B cell (primary cell): ENCODE measurements at regions of chrX and their contacts with region 1.

Region 1: DNA sequence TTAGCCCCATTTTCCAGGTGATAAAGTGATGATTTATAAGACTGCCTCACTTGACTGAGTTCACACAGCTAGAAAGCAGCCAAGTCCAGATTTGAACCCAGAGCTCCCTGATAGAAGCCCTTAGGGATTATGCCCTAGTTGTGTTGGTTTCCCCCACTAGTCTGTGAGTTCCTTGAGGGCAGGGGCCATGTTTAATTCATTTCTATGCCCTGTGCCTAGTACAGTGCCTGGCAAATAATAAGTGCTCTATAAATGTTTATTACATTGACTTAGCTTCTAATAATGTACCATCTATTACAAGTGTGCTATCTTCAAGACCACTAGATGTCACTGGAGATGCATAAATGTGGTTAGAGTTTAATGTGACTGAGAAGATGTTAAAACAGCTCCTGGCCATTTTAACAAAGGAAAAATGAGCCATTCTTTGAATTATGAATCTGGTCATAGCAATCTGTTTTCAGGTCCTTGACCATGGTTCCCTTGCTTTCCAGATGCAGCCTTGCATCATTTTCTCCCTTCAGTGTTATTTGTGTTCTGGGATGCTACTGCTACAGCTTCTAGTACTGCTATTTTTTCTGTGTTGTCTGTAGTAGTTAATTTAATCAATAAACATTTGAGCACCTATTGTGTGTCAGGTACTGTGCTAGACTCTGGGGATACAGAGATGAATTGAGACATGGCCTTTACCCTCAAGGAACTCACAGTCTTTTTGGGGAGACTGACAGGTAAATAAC is 43.2 kb downstream of the SLC9A6 start:
- DNase-seq: peak; percentile 58
- ATAC-seq: peak; percentile 24
- H3K4me3 ChIP-seq: no peak overlapping the region
- H3K4me3 Mint-ChIP-seq: no peak overlapping the region
- H3K27ac ChIP-seq: no peak overlapping the region
- H3K27ac Mint-ChIP-seq: no peak overlapping the region
- H3K4me1 ChIP-seq: no peaks in the 10 kb centered on the region
- H3K4me1 Mint-ChIP-seq: no peaks in the 10 kb centered on the region
- H3K27me3 ChIP-seq: no peaks in the 10 kb centered on the region
- H3K27me3 Mint-ChIP-seq: no peaks in the 10 kb centered on the region
- CTCF ChIP-seq: peak; percentile 67

Region 2: GRCh38 chrX:136162831-136163570 is 134.6 kb after region 1 on chrX:
- CTCF ChIA-PET with region 1: interaction called, 57 read pairs
- POLR2A ChIA-PET with region 1: no interaction called
- intact Hi-C with region 1: loop called (anchors 1 kb)
- DNase-seq: peak; percentile 40
- ATAC-seq: peak; percentile 49
- H3K4me3 ChIP-seq: no peak overlapping the region
- H3K4me3 Mint-ChIP-seq: no peak overlapping the region
- H3K27ac ChIP-seq: no peak overlapping the region
- H3K27ac Mint-ChIP-seq: no peak overlapping the region
- H3K4me1 ChIP-seq: no peaks in the 10 kb centered on the region
- H3K4me1 Mint-ChIP-seq: no peaks in the 10 kb centered on the region
- H3K27me3 ChIP-seq: no peaks in the 10 kb centered on the region
- H3K27me3 Mint-ChIP-seq: no peaks in the 10 kb centered on the region
- CTCF ChIP-seq: peak; percentile 43

Region 3: GRCh38 chrX:136209016-136209738 is 180.8 kb after region 1 on chrX:
- CTCF ChIA-PET with region 1: interaction called, 34 read pairs
- POLR2A ChIA-PET with region 1: no interaction called
- intact Hi-C with region 1: loop called (anchors 2 kb)
- DNase-seq: peak; percentile 40
- ATAC-seq: peak; percentile 16
- H3K4me3 ChIP-seq: no peak overlapping the region
- H3K4me3 Mint-ChIP-seq: peak overlapping the region; percentile 34
- H3K27ac ChIP-seq: no peak overlapping the region
- H3K27ac Mint-ChIP-seq: no peak overlapping the region
- H3K4me1 ChIP-seq: peaks cover 35 to 48% of the 10 kb centered on the region in 2 donors
- H3K4me1 Mint-ChIP-seq: peaks cover 43% of the 10 kb centered on the region
- H3K27me3 ChIP-seq: no peaks in the 10 kb centered on the region
- H3K27me3 Mint-ChIP-seq: no peaks in the 10 kb centered on the region
- CTCF ChIP-seq: no peak

Region 4: GRCh38 chrX:136268051-136269048 is 239.9 kb after region 1 on chrX:
- CTCF ChIA-PET with region 1: interaction called, 153 read pairs
- POLR2A ChIA-PET with region 1: no interaction called
- intact Hi-C with region 1: loop called (anchors 1 kb)
- DNase-seq: peak; percentile 58
- ATAC-seq: no peak
- H3K4me3 ChIP-seq: no peak overlapping the region
- H3K4me3 Mint-ChIP-seq: no peak overlapping the region
- H3K27ac ChIP-seq: no peak overlapping the region
- H3K27ac Mint-ChIP-seq: no peak overlapping the region
- H3K4me1 ChIP-seq: peaks cover 7 to 10% of the 10 kb centered on the region in 2 donors
- H3K4me1 Mint-ChIP-seq: peaks cover 12% of the 10 kb centered on the region
- H3K27me3 ChIP-seq: no peaks in the 10 kb centered on the region
- H3K27me3 Mint-ChIP-seq: no peaks in the 10 kb centered on the region
- CTCF ChIP-seq: peak; percentile 82

Region 5: DNA sequence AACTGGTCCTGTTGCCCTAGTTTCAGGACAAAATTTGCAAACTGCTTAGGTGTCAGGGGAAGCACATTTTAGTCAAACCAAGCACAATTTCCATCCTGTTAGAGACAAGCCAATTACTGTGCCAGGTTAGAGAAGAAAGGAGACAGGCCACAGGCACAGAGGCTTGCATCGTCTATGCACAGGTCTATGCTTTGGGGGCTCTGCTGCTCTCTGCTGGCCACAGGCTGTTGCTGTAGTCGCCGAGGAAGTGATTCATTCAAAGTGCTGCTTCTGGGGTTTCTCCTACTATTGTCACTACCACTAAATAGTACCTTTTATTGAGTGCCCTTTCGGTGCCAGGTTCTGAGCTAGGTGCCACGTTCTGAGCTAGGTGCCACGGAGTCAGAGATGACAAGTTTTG is 549.1 kb after region 1 on chrX:
- CTCF ChIA-PET with region 1: interaction called, 25 read pairs
- POLR2A ChIA-PET with region 1: no interaction called
- intact Hi-C with region 1: loop called (anchors 2 kb)
- DNase-seq: peak; percentile 27
- ATAC-seq: peak; percentile 36
- H3K4me3 ChIP-seq: no peak overlapping the region
- H3K4me3 Mint-ChIP-seq: no peak overlapping the region
- H3K27ac ChIP-seq: no peak overlapping the region
- H3K27ac Mint-ChIP-seq: no peak overlapping the region
- H3K4me1 ChIP-seq: no peaks in the 10 kb centered on the region
- H3K4me1 Mint-ChIP-seq: no peaks in the 10 kb centered on the region
- H3K27me3 ChIP-seq: no peaks in the 10 kb centered on the region
- H3K27me3 Mint-ChIP-seq: no peaks in the 10 kb centered on the region
- CTCF ChIP-seq: peak; percentile 63

Region 6: DNA sequence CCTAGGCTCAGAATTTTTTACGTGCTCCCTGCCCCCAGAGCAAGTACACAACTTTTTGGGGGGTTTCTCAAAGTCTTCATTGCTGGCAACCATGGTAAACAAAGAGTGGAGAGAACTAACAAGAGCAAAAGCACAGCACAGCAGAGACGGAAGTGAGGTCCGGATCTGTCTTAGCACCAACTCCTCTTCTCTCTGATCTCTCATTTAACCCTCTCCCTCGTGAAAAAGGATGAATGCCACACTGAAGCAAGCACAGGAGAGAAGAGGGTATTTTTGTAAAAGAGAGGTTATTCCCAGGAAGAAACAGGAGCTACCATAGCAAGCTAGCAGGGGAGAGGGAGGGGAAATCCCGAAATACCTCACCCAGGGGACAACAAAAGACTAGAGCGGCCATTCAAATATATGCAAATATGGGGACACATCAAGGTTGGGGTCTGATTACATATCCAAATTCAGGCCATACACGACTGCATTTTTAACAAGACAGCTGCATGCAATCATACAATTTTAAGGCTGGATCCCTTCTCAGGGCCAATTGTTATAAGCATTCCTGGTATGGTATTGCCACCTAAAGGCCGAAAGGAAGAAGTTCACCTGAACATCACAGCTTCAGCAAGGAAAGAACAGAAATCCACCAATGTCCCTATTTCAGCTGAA is 666.1 kb after region 1 on chrX:
- CTCF ChIA-PET with region 1: interaction called, 13 read pairs
- POLR2A ChIA-PET with region 1: no interaction called
- intact Hi-C with region 1: no loop called
- DNase-seq: peak; percentile 49
- ATAC-seq: peak; percentile 66
- H3K4me3 ChIP-seq: no peak overlapping the region
- H3K4me3 Mint-ChIP-seq: peak overlapping the region; percentile 55
- H3K27ac ChIP-seq: peak overlapping the region; percentile 2 to 4
- H3K27ac Mint-ChIP-seq: peak overlapping the region; percentile 71
- H3K4me1 ChIP-seq: peaks cover 15 to 25% of the 10 kb centered on the region in 2 donors
- H3K4me1 Mint-ChIP-seq: peaks cover 23% of the 10 kb centered on the region
- H3K27me3 ChIP-seq: no peaks in the 10 kb centered on the region
- H3K27me3 Mint-ChIP-seq: no peaks in the 10 kb centered on the region
- CTCF ChIP-seq: peak; percentile 64

Region 7: GRCh38 chrX:136920001-136920400 is 891.6 kb after region 1 on chrX:
- CTCF ChIA-PET with region 1: no interaction called
- POLR2A ChIA-PET with region 1: no interaction called
- intact Hi-C with region 1: loop called (anchors 2 kb)
- DNase-seq: no peak
- ATAC-seq: no peak
- H3K4me3 ChIP-seq: no peak overlapping the region
- H3K4me3 Mint-ChIP-seq: no peak overlapping the region
- H3K27ac ChIP-seq: no peak overlapping the region
- H3K27ac Mint-ChIP-seq: no peak overlapping the region
- H3K4me1 ChIP-seq: no peaks in the 10 kb centered on the region
- H3K4me1 Mint-ChIP-seq: peaks cover 1% of the 10 kb centered on the region
- H3K27me3 ChIP-seq: no peaks in the 10 kb centered on the region
- H3K27me3 Mint-ChIP-seq: no peaks in the 10 kb centered on the region
- CTCF ChIP-seq: no peak